GM12878 (cell line): ENCODE measurements at regions of chr9 and their contacts with region 1.

Region 1: DNA sequence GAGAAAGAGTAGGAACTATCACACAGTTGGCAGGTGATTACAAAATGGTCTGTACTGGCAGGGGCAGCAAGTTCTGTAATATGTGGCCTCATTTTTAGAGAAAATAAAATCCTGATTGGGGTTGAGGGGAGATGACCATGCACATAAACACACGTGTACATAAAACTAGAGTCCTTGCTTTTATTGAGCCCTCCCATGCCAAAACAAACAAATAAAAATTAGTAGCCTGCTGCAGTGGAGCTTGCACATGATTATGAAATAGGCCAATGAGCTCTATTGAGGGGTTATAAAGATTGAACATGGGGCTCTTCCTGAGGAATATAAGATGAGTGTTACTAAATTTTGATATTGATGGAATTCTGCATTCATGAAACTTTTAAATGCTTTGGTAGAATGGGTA is 248.4 kb downstream of the ELAVL2 start:
- DNase-seq: no peak
- ATAC-seq: no peak
- H3K4me3 ChIP-seq: no peak overlapping the region
- H3K27ac ChIP-seq: no peak overlapping the region
- H3K4me1 ChIP-seq: no peaks in the 10 kb centered on the region
- H3K27me3 ChIP-seq: no peaks in the 10 kb centered on the region
- CTCF ChIP-seq: no peak
- EP300 ChIP-seq: no peak
- POLR2A ChIP-seq: no peak
- RAD21 ChIP-seq: no peak

Region 2: GRCh38 chr9:23543419-23543818 is 34.2 kb before region 1 on chr9:
- CTCF ChIA-PET with region 1: no interaction called
- POLR2A ChIA-PET with region 1: no interaction called
- RAD21 ChIA-PET with region 1: no interaction called
- SMC1A ChIA-PET with region 1: no interaction called
- in situ Hi-C with region 1: no loop called
- intact Hi-C with region 1: no loop called
- DNase-seq: no peak
- ATAC-seq: no peak
- H3K4me3 ChIP-seq: no peak overlapping the region
- H3K27ac ChIP-seq: no peak overlapping the region
- H3K4me1 ChIP-seq: no peaks in the 10 kb centered on the region
- H3K27me3 ChIP-seq: no peaks in the 10 kb centered on the region
- CTCF ChIP-seq: no peak
- EP300 ChIP-seq: no peak
- POLR2A ChIP-seq: no peak
- RAD21 ChIP-seq: no peak

Region 3: GRCh38 chr9:23621188-23621587 is 43.6 kb after region 1 on chr9:
- CTCF ChIA-PET with region 1: no interaction called
- POLR2A ChIA-PET with region 1: no interaction called
- RAD21 ChIA-PET with region 1: no interaction called
- SMC1A ChIA-PET with region 1: interaction called, 3 read pairs
- in situ Hi-C with region 1: no loop called
- intact Hi-C with region 1: loop called (anchors 5 kb)
- DNase-seq: no peak
- ATAC-seq: no peak
- H3K4me3 ChIP-seq: no peak overlapping the region
- H3K27ac ChIP-seq: no peak overlapping the region
- H3K4me1 ChIP-seq: no peaks in the 10 kb centered on the region
- H3K27me3 ChIP-seq: no peaks in the 10 kb centered on the region
- CTCF ChIP-seq: no peak
- EP300 ChIP-seq: no peak
- POLR2A ChIP-seq: no peak
- RAD21 ChIP-seq: no peak